WTC11 (cell line): ENCODE measurements at regions of chr6 and their contacts with region 1.

Region 1: DNA sequence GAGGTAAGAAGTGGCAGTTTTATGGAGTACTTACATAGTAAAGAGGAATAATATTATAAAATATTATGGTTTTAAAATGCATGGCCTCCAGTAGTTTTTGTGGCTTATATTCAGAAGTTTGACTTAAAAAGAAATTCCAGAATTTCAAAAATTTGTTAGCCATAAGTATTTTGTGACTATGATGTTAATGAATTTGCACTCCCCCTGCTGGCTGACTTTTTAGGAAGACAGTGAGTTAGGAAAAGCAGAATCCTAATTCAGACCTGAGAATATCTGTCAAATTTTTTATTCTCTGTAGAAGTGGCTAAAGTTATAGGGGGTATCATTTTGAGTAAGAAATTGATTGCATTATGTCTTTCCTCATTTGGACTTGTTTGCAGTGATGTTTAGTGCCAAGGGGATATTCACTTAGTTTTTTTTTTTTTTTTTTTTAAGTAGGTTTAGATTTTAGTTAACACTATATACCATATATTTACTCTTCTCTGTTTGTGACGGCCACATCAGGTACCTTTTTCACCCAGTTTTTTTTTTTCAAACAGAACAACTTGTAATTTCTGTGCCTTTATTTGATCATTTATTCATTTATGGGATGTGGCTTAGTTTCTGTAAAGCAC is 40.8 kb downstream of the ZFAND3 start:
- DNase-seq: no peak
- ATAC-seq: no peak
- H3K4me3 Mint-ChIP-seq: no peak overlapping the region
- H3K27ac Mint-ChIP-seq: no peak overlapping the region; the same call in 1 of the 2 replicates
- H3K4me1 Mint-ChIP-seq: peaks cover 17% of the 10 kb centered on the region
- H3K27me3 Mint-ChIP-seq: no peaks in the 10 kb centered on the region
- CTCF ChIP-seq: peak; percentile 30; the same call in 1 of the 2 replicates

Region 2: GRCh38 chr6:37791156-37791919 is 69.0 kb before region 1 on chr6:
- CTCF ChIA-PET with region 1: interaction called, 10 read pairs
- POLR2A ChIA-PET with region 1: no interaction called
- DNase-seq: peak; percentile 90
- ATAC-seq: peak; percentile 99
- H3K4me3 Mint-ChIP-seq: no peak overlapping the region; the same call in 1 of the 2 replicates
- H3K27ac Mint-ChIP-seq: peak overlapping the region; percentile 72
- H3K4me1 Mint-ChIP-seq: peaks cover 29% of the 10 kb centered on the region
- H3K27me3 Mint-ChIP-seq: peaks cover 2% of the 10 kb centered on the region
- CTCF ChIP-seq: peak; percentile 86

Region 3: GRCh38 chr6:37845026-37845911 is 15.1 kb before region 1 on chr6:
- CTCF ChIA-PET with region 1: interaction called, 11 read pairs
- POLR2A ChIA-PET with region 1: no interaction called
- DNase-seq: no peak
- ATAC-seq: no peak
- H3K4me3 Mint-ChIP-seq: no peak overlapping the region
- H3K27ac Mint-ChIP-seq: 0 out of 2 replicates have a peak overlapping the region, but pooled peaks have one; percentile 48
- H3K4me1 Mint-ChIP-seq: peaks cover 12% of the 10 kb centered on the region
- H3K27me3 Mint-ChIP-seq: no peaks in the 10 kb centered on the region
- CTCF ChIP-seq: no peak

Region 4: GRCh38 chr6:38413102-38413800 is 552.9 kb after region 1 on chr6:
- CTCF ChIA-PET with region 1: no interaction called
- POLR2A ChIA-PET with region 1: no interaction called
- DNase-seq: no peak
- ATAC-seq: no peak
- H3K4me3 Mint-ChIP-seq: no peak overlapping the region
- H3K27ac Mint-ChIP-seq: no peak overlapping the region
- H3K4me1 Mint-ChIP-seq: no peaks in the 10 kb centered on the region
- H3K27me3 Mint-ChIP-seq: no peaks in the 10 kb centered on the region
- CTCF ChIP-seq: no peak